Transverse colon (tissue), 4 donors: ENCODE measurements at regions of chr9 and their contacts with region 1.

Region 1: DNA sequence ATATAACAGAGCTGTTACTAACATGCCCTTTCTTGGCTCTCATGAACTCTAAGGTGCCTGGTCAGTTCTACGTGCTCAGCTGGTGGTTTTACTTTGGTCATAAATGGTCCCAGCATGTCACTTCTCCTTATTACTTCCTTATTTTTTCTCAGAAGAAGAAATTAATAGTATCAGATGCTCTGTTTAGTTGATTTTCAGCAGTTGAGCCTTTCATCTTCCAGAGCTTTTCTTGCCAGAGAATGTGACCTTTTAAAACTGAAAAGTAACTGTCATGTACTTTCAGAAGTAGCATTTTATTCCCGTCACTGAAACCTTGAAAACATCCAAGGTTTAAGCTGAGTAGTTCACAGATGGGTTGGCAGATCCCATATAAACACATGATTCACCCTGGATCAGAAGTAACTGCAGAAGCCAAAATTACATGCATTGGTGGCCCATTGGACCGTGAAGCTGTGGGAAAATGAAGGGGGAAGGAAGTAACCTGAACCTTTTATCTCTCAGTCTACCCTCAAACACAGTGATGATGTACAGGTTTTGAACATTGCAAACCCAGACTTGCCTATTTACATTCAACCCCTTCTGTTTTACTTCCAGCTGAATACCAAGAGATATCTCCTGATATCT is 50.5 kb downstream of the HACD4 start:
- DNase-seq: no peak
- H3K4me3 ChIP-seq: no peak overlapping the region
- H3K27ac ChIP-seq: peak overlapping the region; percentile 54 to 80 (median 65)
- H3K4me1 ChIP-seq: peaks cover 0 to 22% (median 3%) of the 10 kb centered on the region in 4 donors
- H3K27me3 ChIP-seq: no peaks in the 10 kb centered on the region
- CTCF ChIP-seq: no peak
- EP300 ChIP-seq: no peak
- POLR2A ChIP-seq: no peak

Region 2: DNA sequence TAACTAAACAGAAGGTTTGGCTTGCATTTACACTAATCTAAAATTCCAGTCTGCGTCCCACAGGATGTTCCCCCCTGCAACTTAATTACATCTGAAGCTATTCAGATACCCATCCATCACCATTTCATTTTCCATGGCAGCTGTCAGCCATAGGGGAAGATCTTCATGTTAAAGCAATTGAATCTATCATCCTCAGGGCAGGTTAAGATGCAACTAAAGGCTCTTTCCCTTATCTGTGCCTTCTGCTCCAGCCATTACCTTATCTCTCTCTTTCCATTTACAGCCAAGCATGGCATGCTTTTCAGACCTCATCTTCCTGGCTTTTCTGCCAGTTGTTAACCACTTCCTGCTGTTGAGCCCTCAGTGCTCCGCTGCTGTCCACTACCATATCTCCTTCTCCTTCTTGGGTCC is 66.3 kb after region 1 on chr9:
- in situ Hi-C with region 1: loop called in 1 of 4 experiments (anchors 10 kb)
- intact Hi-C with region 1: no loop called
- DNase-seq: no peak
- H3K4me3 ChIP-seq: no peak overlapping the region
- H3K27ac ChIP-seq: no peak overlapping the region
- H3K4me1 ChIP-seq: no peaks in the 10 kb centered on the region
- H3K27me3 ChIP-seq: no peaks in the 10 kb centered on the region
- CTCF ChIP-seq: no peak
- EP300 ChIP-seq: no peak
- POLR2A ChIP-seq: no peak

Region 3: GRCh38 chr9:21160178-21160577 is 179.2 kb after region 1 on chr9:
- in situ Hi-C with region 1: no loop called
- intact Hi-C with region 1: no loop called
- DNase-seq: no peak
- H3K4me3 ChIP-seq: no peak overlapping the region
- H3K27ac ChIP-seq: no peak overlapping the region
- H3K4me1 ChIP-seq: no peaks in the 10 kb centered on the region
- H3K27me3 ChIP-seq: no peaks in the 10 kb centered on the region
- CTCF ChIP-seq: no peak
- EP300 ChIP-seq: no peak
- POLR2A ChIP-seq: no peak